Activated B cell treated with CpG ODN at 0.5 μM for 24 hours (primary cell): ENCODE measurements at regions of chr1 and their contacts with region 1.

Region 1: GRCh38 chr1:112674439-112674985 is at the start of gene MOV10:
- DNase-seq: peak; percentile 45
- ATAC-seq: peak; percentile 69
- H3K4me3 Mint-ChIP-seq: peak within 1 kb of the TSS; percentile 97
- H3K27ac Mint-ChIP-seq: peak within 1 kb of the TSS; percentile 88
- H3K4me1 Mint-ChIP-seq: peaks cover 35% of the 10 kb centered on the region
- H3K27me3 Mint-ChIP-seq: no peaks in the 10 kb centered on the region
- CTCF ChIP-seq: no peak
- total RNA-seq, gene MOV10: 33.3 and 36.4 TPM in 2 replicates

Region 2: DNA sequence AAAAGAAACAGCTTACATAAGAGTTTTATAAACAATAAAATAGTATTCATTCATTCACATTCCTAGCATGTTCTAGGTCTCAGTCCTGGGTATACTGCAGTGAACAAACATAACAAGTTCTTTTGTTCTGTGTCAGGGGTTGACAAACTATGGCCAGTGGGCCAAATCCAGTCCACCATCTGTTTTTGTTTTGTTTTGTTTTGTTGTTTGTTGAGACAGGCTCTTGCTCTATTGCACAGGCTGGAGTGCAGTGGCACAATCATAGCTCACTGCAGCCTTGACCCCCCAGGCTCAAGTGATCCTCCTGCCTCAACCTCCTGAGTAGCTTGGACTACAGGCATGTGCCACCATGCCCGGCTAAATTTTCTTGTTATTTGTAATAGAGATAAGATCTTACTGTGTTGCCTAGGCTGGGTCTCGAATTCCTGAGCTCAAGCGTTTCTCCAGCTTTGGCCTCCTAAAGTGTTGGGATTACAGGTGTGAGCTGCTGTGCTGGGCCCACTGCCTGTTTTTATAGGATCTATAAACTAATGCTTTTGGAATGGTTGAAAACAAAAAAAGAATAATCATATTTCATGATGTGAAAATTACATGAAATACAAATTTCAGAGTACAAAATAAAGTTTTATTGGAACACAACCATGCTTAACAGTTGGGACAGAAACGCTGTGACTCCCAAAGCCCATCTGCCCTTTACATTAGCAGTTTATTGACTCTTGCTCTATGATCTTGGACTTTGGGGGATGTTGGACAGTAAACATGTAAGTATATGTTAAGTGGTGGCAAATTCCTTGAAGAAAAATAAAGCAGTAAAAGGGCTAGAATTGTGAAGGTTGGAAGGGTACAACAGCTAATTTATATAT is 37.0 kb before region 1 on chr1:
- CTCF ChIA-PET with region 1: no interaction called
- POLR2A ChIA-PET with region 1: interaction called, 3 read pairs
- intact Hi-C with region 1: loop called (anchors 5 kb)
- DNase-seq: no peak
- ATAC-seq: no peak
- H3K4me3 Mint-ChIP-seq: no peak overlapping the region
- H3K27ac Mint-ChIP-seq: peak overlapping the region; percentile 46
- H3K4me1 Mint-ChIP-seq: peaks cover 55% of the 10 kb centered on the region
- H3K27me3 Mint-ChIP-seq: no peaks in the 10 kb centered on the region
- CTCF ChIP-seq: no peak

Region 3: GRCh38 chr1:112700290-112701226 is 26.0 kb after region 1 on chr1:
- CTCF ChIA-PET with region 1: interaction called, 7 read pairs
- POLR2A ChIA-PET with region 1: interaction called, 12 read pairs
- intact Hi-C with region 1: loop called (anchors 1 kb)
- DNase-seq: peak; percentile 71
- ATAC-seq: peak; percentile 75
- H3K4me3 Mint-ChIP-seq: peak overlapping the region; percentile 32
- H3K27ac Mint-ChIP-seq: peak overlapping the region; percentile 83
- H3K4me1 Mint-ChIP-seq: peaks cover 64% of the 10 kb centered on the region
- H3K27me3 Mint-ChIP-seq: no peaks in the 10 kb centered on the region
- CTCF ChIP-seq: no peak

Region 4: DNA sequence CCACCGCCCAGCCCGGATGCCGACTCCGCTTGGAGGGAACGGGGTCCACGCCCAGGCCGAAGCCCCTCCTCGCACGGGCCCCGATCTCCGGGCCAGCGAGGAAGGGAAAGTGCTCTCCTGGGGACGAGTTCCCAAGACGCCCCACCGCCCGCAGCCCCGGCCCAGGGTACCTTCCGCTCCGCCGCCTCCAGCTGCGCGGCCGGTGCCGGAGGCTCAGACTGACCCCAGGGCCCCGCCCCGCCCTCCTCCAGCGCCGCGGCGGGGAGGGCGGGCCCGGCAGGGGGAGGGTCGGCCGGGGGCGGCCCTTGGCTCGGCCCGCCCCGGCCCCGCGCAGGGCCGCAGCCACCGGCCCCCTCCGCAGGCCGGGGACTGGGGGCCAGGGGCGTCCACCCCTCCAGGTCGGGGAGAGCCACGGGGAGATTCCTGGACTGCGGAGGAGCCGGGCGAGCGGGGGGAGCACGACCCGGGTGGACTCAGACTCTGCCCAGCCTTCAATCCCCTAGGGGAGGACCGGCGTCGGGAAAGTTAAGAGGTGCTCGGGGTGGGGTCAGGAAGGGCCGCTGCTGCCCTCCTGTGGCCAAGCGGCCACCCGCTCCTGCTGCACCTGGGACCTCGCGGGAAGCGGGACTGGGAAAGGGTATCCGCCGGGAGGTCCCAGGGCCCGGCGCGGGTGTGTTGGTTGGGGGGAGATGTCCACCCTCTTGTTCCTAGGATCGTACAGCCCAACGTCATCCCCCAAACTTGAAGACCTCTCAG is 32.6 kb after region 1 on chr1 and contains the start of gene RHOC:
- CTCF ChIA-PET with region 1: interaction called, 18 read pairs
- POLR2A ChIA-PET with region 1: interaction called, 12 read pairs
- intact Hi-C with region 1: loop called (anchors 1 kb)
- DNase-seq: peak; percentile 74
- ATAC-seq: peak; percentile 86
- H3K4me3 Mint-ChIP-seq: peak within 1 kb of the TSS; percentile 82
- H3K27ac Mint-ChIP-seq: no peak within 1 kb of the TSS
- H3K4me1 Mint-ChIP-seq: peaks cover 47% of the 10 kb centered on the region
- H3K27me3 Mint-ChIP-seq: no peaks in the 10 kb centered on the region
- CTCF ChIP-seq: no peak
- total RNA-seq, gene RHOC: 11.5 and 13.5 TPM in 2 replicates